PC-9 (cell line): ENCODE measurements at regions of chr15 and their contacts with region 1.

Region 1: DNA sequence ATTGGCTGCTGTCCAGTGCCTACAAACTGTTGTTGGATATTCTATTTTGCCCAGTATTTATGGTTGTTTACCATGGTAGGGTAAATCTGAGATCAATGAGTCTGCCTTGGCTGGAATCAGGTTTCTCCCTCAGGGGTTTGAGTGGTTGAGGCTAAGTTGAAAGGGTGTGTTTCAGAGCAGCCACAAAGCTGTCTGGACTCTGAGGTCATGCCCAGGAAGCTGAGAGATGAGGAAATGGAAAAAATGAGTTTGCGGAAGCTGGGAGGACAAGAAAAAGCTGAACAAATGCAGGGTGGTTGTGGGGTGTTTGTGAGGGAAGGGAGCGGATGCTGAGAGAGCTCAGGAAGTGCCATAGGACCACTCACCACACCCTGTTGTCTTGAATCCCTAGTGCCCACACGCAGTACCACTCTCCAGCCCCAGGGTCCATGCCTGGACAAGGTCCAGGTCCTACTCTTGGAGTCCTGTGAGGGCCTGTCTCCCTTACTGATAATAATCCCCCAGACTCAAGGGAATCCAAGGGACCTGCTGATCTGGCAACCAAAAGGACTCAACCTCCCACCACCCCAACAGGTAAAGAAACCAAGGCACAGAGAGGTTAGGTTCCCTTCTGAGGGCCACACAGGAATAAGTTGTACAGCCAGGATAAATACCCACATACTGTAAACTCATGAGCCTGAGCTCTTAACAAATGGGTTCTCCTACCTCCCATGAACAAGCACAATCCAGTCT is 81.6 kb downstream of the PPCDC start:
- DNase-seq: peak; percentile 87 to 98
- H3K4me3 ChIP-seq: no peak overlapping the region
- H3K27ac ChIP-seq: peak overlapping the region; percentile 99
- H3K4me1 ChIP-seq: peaks cover 62% of the 10 kb centered on the region
- H3K27me3 ChIP-seq: no peaks in the 10 kb centered on the region
- CTCF ChIP-seq: no peak

Region 2: GRCh38 chr15:74790073-74790916 is 314.7 kb before region 1 on chr15:
- CTCF ChIA-PET with region 1: no interaction called
- POLR2A ChIA-PET with region 1: no interaction called
- intact Hi-C with region 1: no loop called
- DNase-seq: peak in 1 of 2 experiments; percentile 70
- H3K4me3 ChIP-seq: no peak overlapping the region
- H3K27ac ChIP-seq: no peak overlapping the region
- H3K4me1 ChIP-seq: peaks cover 15% of the 10 kb centered on the region
- H3K27me3 ChIP-seq: no peaks in the 10 kb centered on the region
- CTCF ChIP-seq: no peak

Region 3: GRCh38 chr15:75058127-75058905 is 46.7 kb before region 1 on chr15:
- CTCF ChIA-PET with region 1: interaction called, 3 read pairs
- POLR2A ChIA-PET with region 1: no interaction called
- intact Hi-C with region 1: loop called (anchors 1 kb)
- DNase-seq: peak; percentile 66 to 85
- H3K4me3 ChIP-seq: no peak overlapping the region
- H3K27ac ChIP-seq: peak overlapping the region; percentile 90
- H3K4me1 ChIP-seq: peaks cover 34% of the 10 kb centered on the region
- H3K27me3 ChIP-seq: no peaks in the 10 kb centered on the region
- CTCF ChIP-seq: no peak

Region 4: GRCh38 chr15:75138016-75138999 is 33.3 kb after region 1 on chr15:
- CTCF ChIA-PET with region 1: no interaction called
- POLR2A ChIA-PET with region 1: no interaction called
- intact Hi-C with region 1: no loop called
- DNase-seq: no peak
- H3K4me3 ChIP-seq: no peak overlapping the region
- H3K27ac ChIP-seq: no peak overlapping the region
- H3K4me1 ChIP-seq: no peaks in the 10 kb centered on the region
- H3K27me3 ChIP-seq: no peaks in the 10 kb centered on the region
- CTCF ChIP-seq: no peak

Region 5: DNA sequence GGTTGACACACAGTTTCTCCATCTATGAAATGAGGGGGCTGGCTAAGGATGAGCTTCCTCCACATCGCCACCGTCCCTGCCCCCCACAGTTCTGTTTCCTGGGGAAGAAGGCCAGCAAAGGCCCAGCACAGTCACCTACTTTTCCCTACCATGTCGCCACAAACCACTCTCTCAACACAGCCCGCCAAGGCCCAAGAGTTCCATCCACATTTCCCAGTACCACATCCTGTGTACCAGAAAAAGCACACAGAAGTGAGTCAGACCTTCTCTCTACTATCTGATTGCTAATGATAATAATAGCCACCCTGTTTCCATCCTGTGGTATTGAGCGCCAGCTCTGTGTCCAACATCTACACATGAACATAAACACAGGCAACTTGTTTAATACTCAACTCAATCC is 66.4 kb after region 1 on chr15:
- CTCF ChIA-PET with region 1: interaction called, 8 read pairs
- POLR2A ChIA-PET with region 1: interaction called, 4 read pairs
- intact Hi-C with region 1: loop called (anchors 1 kb)
- DNase-seq: peak in 1 of 2 experiments; percentile 62
- H3K4me3 ChIP-seq: no peak overlapping the region
- H3K27ac ChIP-seq: peak overlapping the region; percentile 72
- H3K4me1 ChIP-seq: peaks cover 80% of the 10 kb centered on the region
- H3K27me3 ChIP-seq: no peaks in the 10 kb centered on the region
- CTCF ChIP-seq: no peak

Region 6: GRCh38 chr15:75185271-75186029 is 80.5 kb after region 1 on chr15:
- CTCF ChIA-PET with region 1: interaction called, 11 read pairs
- POLR2A ChIA-PET with region 1: no interaction called
- intact Hi-C with region 1: no loop called
- DNase-seq: no peak
- H3K4me3 ChIP-seq: no peak overlapping the region
- H3K27ac ChIP-seq: no peak overlapping the region
- H3K4me1 ChIP-seq: 0 out of 2 replicates have a peak, but pooled peaks cover 2% of the 10 kb centered on the region
- H3K27me3 ChIP-seq: no peaks in the 10 kb centered on the region
- CTCF ChIP-seq: no peak